B cell (primary cell): ENCODE measurements at regions of chr11 and their contacts with region 1.

Region 1: GRCh38 chr11:86193297-86194095 is 51.1 kb upstream of the EED start:
- DNase-seq: peak; percentile 80
- ATAC-seq: peak; percentile 94
- H3K4me3 ChIP-seq: peak overlapping the region; percentile 24 to 62 (median 52)
- H3K4me3 Mint-ChIP-seq: peak overlapping the region; percentile 67
- H3K27ac ChIP-seq: peak overlapping the region; percentile 21 to 70
- H3K27ac Mint-ChIP-seq: peak overlapping the region; percentile 90
- H3K4me1 ChIP-seq: peaks cover 20 to 22% of the 10 kb centered on the region in 2 donors
- H3K4me1 Mint-ChIP-seq: peaks cover 28% of the 10 kb centered on the region
- H3K27me3 ChIP-seq: no peaks in the 10 kb centered on the region
- H3K27me3 Mint-ChIP-seq: no peaks in the 10 kb centered on the region
- CTCF ChIP-seq: peak; percentile 79

Region 2: DNA sequence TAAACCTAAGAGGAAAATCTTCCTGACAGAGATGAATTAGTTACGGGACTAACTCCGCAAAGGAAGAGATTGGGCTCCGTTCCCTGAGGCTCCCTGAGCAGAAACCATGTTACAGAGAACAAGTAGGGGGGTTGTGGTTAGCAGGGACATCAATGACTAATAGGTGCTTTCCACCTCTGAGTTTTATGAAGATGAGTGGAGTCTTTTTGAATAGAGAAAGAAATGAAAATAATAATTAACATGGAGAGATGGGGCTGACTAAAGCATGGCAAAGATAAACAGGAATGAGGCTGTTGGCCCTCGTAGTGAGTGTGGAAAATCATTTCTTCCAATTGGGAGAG is 77.1 kb before region 1 on chr11:
- CTCF ChIA-PET with region 1: interaction called, 16 read pairs
- POLR2A ChIA-PET with region 1: no interaction called
- intact Hi-C with region 1: loop called (anchors 2 kb)
- DNase-seq: peak; percentile 28
- ATAC-seq: peak; percentile 92
- H3K4me3 ChIP-seq: no peak overlapping the region
- H3K4me3 Mint-ChIP-seq: peak overlapping the region; percentile 38
- H3K27ac ChIP-seq: no peak overlapping the region
- H3K27ac Mint-ChIP-seq: peak overlapping the region; percentile 54
- H3K4me1 ChIP-seq: peaks cover 7 to 12% of the 10 kb centered on the region in 2 donors
- H3K4me1 Mint-ChIP-seq: peaks cover 20% of the 10 kb centered on the region
- H3K27me3 ChIP-seq: no peaks in the 10 kb centered on the region
- H3K27me3 Mint-ChIP-seq: no peaks in the 10 kb centered on the region
- CTCF ChIP-seq: no peak

Region 3: GRCh38 chr11:86162239-86162638 is 31.3 kb before region 1 on chr11:
- CTCF ChIA-PET with region 1: interaction called, 10 read pairs
- POLR2A ChIA-PET with region 1: no interaction called
- intact Hi-C with region 1: no loop called
- DNase-seq: no peak
- ATAC-seq: no peak
- H3K4me3 ChIP-seq: no peak overlapping the region
- H3K4me3 Mint-ChIP-seq: no peak overlapping the region
- H3K27ac ChIP-seq: no peak overlapping the region
- H3K27ac Mint-ChIP-seq: no peak overlapping the region
- H3K4me1 ChIP-seq: peaks cover 7 to 14% of the 10 kb centered on the region in 2 donors
- H3K4me1 Mint-ChIP-seq: peaks cover 19% of the 10 kb centered on the region
- H3K27me3 ChIP-seq: no peaks in the 10 kb centered on the region
- H3K27me3 Mint-ChIP-seq: no peaks in the 10 kb centered on the region
- CTCF ChIP-seq: no peak

Region 4: GRCh38 chr11:86218125-86219084 is 24.9 kb after region 1 on chr11:
- CTCF ChIA-PET with region 1: interaction called, 28 read pairs
- POLR2A ChIA-PET with region 1: interaction called, 8 read pairs
- intact Hi-C with region 1: loop called (anchors 1 kb)
- DNase-seq: peak; percentile 65
- ATAC-seq: peak; percentile 29
- H3K4me3 ChIP-seq: peak overlapping the region in 4 of 5 experiments; percentile 21 to 53 (median 34)
- H3K4me3 Mint-ChIP-seq: peak overlapping the region; percentile 75
- H3K27ac ChIP-seq: peak overlapping the region; percentile 62 to 77
- H3K27ac Mint-ChIP-seq: peak overlapping the region; percentile 86
- H3K4me1 ChIP-seq: peaks cover 31 to 36% of the 10 kb centered on the region in 2 donors
- H3K4me1 Mint-ChIP-seq: peaks cover 37% of the 10 kb centered on the region
- H3K27me3 ChIP-seq: no peaks in the 10 kb centered on the region
- H3K27me3 Mint-ChIP-seq: no peaks in the 10 kb centered on the region
- CTCF ChIP-seq: peak; percentile 68

Region 5: GRCh38 chr11:86302100-86302793 is 108.8 kb after region 1 on chr11 and contains the start of gene HIKESHI:
- CTCF ChIA-PET with region 1: interaction called, 4 read pairs
- POLR2A ChIA-PET with region 1: no interaction called
- intact Hi-C with region 1: loop called (anchors 1 kb)
- DNase-seq: peak; percentile 90
- ATAC-seq: peak; percentile 99
- H3K4me3 ChIP-seq: peak within 1 kb of the TSS; percentile 70 to 96 (median 92)
- H3K4me3 Mint-ChIP-seq: peak within 1 kb of the TSS; percentile 98
- H3K27ac ChIP-seq: peak within 1 kb of the TSS; percentile 70 to 95
- H3K27ac Mint-ChIP-seq: peak within 1 kb of the TSS; percentile 95
- H3K4me1 ChIP-seq: peaks cover 10 to 13% of the 10 kb centered on the region in 2 donors
- H3K4me1 Mint-ChIP-seq: peaks cover 20% of the 10 kb centered on the region
- H3K27me3 ChIP-seq: no peaks in the 10 kb centered on the region
- H3K27me3 Mint-ChIP-seq: no peaks in the 10 kb centered on the region
- CTCF ChIP-seq: no peak
- total RNA-seq, gene HIKESHI: 23.3 and 24.4 TPM in 2 replicates